Mammary epithelial cell (primary cell): ENCODE measurements at regions of chr3 and their contacts with region 1.

Region 1: GRCh38 chr3:50600841-50601591 is 10.6 kb downstream of the CISH start:
- DNase-seq: peak; percentile 91
- H3K4me3 ChIP-seq: peak overlapping the region in 1 of 3 experiments; percentile 9
- H3K27ac ChIP-seq: peak overlapping the region; percentile 42
- H3K4me1 ChIP-seq: peaks cover 31% of the 10 kb centered on the region
- H3K27me3 ChIP-seq: no peaks in the 10 kb centered on the region
- CTCF ChIP-seq: no peak

Region 2: GRCh38 chr3:49955636-49956035 is 645.4 kb before region 1 on chr3:
- CTCF ChIA-PET with region 1: no interaction called
- dilution Hi-C with region 1: no loop called
- in situ Hi-C with region 1: no loop called
- intact Hi-C with region 1: no loop called
- DNase-seq: no peak
- H3K4me3 ChIP-seq: no peak overlapping the region
- H3K27ac ChIP-seq: no peak overlapping the region
- H3K4me1 ChIP-seq: peaks cover 2% of the 10 kb centered on the region
- H3K27me3 ChIP-seq: no peaks in the 10 kb centered on the region
- CTCF ChIP-seq: no peak

Region 3: DNA sequence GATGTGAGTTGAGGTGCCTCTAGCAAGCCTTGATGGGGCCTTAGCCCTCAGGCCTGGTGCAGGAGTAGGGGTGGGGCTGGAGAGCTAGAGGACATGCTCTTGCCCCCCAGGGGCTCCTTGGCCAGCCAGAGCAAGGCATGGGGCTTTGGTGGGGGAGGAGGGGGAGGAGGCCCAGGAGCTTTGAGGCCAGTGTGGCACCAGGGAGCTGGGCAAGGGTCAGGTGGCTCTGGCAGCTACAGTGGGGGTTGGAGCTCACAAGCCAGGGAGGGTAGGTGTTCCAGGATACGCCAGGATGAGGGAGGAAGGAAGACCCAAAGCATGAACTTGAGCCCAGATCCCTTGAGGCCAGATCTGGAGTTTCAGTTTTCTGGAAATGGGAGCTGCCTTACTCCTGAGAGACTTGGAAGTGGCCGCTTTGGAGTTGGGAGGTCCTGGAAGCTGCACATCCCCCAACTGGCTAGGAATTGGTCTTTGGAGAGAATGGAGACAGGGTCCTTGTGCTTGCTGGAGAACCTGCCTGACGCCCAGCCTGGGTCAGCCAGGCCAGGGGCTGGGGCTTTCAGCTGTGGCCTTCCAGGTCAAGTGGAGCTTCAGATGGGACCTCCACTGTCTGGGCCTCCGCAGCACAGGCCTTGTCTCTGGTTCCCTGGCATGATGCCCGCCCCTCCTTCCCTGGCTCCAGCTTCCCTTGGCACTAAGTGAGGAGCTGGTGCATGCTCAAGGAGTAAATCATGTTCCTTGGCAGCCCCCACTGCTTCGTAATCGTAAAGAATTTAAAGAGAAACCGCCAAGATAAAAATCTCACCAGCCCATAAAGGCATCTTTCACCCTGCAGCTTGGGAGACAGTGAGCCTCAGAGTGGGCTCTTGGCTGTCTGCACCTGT is 437.2 kb before region 1 on chr3:
- CTCF ChIA-PET with region 1: no interaction called
- dilution Hi-C with region 1: no loop called
- in situ Hi-C with region 1: no loop called
- intact Hi-C with region 1: no loop called
- DNase-seq: peak; percentile 93
- H3K4me3 ChIP-seq: no peak overlapping the region
- H3K27ac ChIP-seq: peak overlapping the region; percentile 30
- H3K4me1 ChIP-seq: peaks cover 95% of the 10 kb centered on the region
- H3K27me3 ChIP-seq: no peaks in the 10 kb centered on the region
- CTCF ChIP-seq: no peak

Region 4: DNA sequence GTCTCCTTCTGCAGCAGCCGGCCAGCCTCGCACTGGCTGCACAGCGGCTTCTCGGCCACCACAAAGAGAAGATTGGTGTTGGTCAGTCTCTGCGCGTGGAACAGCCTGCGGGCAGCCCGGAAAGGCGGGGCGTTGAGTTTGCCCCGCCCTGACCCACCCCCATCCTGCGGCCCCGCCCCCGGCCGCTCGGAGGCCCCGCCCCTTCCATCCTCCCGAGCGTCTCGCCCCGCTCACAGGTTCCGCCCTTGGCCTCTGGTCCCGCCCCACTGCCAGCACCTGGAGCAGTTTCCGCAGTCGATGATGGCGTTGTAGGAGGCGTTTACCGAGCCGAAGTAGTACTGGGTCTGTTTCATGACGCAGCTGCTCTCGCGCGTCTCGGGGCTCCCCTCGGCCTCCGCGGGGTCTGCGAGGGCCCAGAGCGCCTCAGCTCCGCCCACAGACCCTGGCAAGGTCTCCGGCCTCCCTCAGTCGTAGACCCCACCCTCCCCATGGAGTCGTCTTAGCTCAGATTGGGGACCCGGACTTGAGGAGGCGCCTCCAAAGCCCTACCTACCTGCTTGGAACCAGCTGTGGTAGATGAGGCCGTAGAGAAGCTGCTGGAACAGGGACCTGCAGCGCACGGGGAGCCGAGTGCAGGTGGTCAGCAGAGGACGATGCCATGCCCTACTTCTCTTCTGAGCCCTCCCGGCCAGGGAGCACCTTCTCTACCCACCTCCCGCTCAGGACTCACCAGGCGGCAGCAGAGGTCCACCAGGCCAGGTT is 235.8 kb before region 1 on chr3:
- CTCF ChIA-PET with region 1: no interaction called
- dilution Hi-C with region 1: loop called (anchors 5 kb)
- in situ Hi-C with region 1: no loop called
- intact Hi-C with region 1: no loop called
- DNase-seq: peak; percentile 85
- H3K4me3 ChIP-seq: peak overlapping the region; percentile 40 to 76 (median 62)
- H3K27ac ChIP-seq: no peak overlapping the region
- H3K4me1 ChIP-seq: peaks cover 14% of the 10 kb centered on the region
- H3K27me3 ChIP-seq: no peaks in the 10 kb centered on the region
- CTCF ChIP-seq: peak in 1 of 2 donors; percentile 25

Region 5: DNA sequence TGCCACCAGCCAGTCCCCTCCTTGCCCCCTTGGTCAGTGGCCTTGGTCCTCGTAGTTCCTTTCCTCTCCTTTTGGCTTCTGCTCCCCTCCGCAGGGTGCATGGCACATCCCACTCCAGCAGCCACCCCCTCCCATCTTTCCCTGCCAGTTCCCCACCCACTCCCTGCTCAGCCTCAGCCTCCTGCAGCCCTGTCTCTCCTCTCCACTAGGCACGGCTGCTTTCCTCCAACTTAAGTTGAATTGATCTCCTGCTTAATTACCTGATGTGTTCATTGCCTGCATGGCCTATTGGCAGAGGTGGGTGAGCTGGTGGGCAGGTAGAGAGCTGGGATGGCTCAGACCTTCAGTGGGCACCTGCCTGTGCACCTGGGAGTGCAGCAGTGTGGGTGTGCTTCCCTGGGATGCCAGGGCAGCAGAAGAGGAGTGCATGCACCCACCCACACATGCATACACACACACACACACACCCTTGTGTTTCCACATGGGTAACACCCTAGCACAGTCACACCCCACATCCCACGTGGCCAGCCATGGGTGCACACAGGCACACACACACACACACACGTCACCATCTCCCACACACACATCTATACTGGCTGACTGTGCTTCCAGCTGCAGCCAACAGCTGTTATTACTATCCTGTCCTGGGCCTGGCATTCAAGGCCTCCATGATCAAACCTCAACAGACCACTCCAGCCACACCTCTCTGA is 64.4 kb before region 1 on chr3:
- CTCF ChIA-PET with region 1: no interaction called
- dilution Hi-C with region 1: loop called (anchors 5 kb)
- in situ Hi-C with region 1: no loop called
- intact Hi-C with region 1: no loop called
- DNase-seq: peak; percentile 8
- H3K4me3 ChIP-seq: no peak overlapping the region
- H3K27ac ChIP-seq: no peak overlapping the region
- H3K4me1 ChIP-seq: peaks cover 9% of the 10 kb centered on the region
- H3K27me3 ChIP-seq: peaks cover 4% of the 10 kb centered on the region
- CTCF ChIP-seq: no peak

Region 6: GRCh38 chr3:50550079-50550741 is 50.8 kb before region 1 on chr3:
- CTCF ChIA-PET with region 1: no interaction called
- dilution Hi-C with region 1: no loop called
- in situ Hi-C with region 1: no loop called
- intact Hi-C with region 1: no loop called
- DNase-seq: peak; percentile 13
- H3K4me3 ChIP-seq: no peak overlapping the region
- H3K27ac ChIP-seq: no peak overlapping the region
- H3K4me1 ChIP-seq: peaks cover 19% of the 10 kb centered on the region
- H3K27me3 ChIP-seq: no peaks in the 10 kb centered on the region
- CTCF ChIP-seq: peak; percentile 75 to 81

Region 7: DNA sequence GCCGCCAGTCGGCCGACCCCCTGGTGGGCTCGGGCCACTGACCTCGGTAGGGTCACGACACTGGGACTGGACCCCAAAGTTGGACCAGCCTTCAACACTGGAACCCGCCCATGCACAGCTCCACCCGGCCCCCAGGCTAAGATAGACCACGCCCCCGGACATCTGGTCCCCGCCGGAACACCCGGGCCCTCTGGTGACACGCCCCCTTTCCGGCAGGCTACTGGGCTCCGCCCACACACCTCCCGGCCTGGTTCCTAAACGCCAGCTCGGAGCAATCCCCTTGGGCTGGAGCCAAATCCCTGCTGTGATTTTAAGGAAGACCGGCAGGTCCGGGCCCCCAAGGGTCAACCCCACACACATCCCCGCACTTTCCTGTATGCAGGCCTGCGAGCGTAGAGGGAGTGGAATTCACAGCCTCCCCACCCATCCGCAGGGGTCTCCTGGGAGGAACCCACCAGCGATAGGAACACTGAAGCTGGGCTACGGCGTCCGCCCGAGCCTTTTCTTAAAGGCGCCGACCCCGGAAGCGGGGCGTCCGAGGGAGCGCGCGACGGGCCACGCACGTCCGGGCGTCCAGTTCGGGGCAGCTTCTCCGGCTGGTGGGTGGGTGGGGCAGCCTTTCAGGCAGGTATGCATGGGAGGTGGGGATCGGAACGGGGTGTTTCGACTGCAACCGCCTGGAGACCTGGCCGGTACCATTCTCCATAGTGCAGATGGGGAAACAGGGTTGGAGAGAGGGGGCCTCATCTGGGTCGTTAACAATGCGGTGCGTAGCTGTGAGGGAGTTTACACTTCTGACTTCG is 31.9 kb before region 1 on chr3 and contains the start of gene HEMK1:
- CTCF ChIA-PET with region 1: no interaction called
- dilution Hi-C with region 1: loop called (anchors 5 kb)
- in situ Hi-C with region 1: no loop called
- intact Hi-C with region 1: loop called (anchors 1 kb)
- DNase-seq: peak; percentile 89
- H3K4me3 ChIP-seq: peak within 1 kb of the TSS; percentile 86 to 97 (median 93)
- H3K27ac ChIP-seq: peak within 1 kb of the TSS; percentile 73
- H3K4me1 ChIP-seq: peaks cover 16% of the 10 kb centered on the region
- H3K27me3 ChIP-seq: no peaks in the 10 kb centered on the region
- CTCF ChIP-seq: no peak
- total RNA-seq, gene HEMK1: 14.2 to 23.1 TPM

Region 8: DNA sequence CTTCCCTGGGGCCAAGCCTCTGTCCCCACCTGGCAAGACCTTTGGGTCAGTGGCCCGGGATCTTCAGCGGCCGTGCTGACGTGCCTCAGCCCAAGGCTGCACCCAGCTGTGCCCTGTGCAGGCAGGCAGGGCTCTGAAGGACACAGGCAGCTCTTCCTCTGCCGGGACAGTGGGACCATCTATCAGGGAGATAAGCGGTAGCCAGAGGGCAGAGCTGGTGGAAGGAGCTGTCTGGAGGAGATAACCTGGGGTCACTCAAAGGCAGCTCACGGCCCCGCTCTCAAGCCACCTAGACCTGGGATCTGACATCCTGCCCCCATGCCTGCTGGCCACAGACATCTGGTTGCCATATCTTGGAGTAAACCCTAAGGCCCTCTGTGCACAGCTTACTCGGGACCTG is 1428.0 kb after region 1 on chr3:
- CTCF ChIA-PET with region 1: interaction called, 15 read pairs
- dilution Hi-C with region 1: no loop called
- in situ Hi-C with region 1: no loop called
- intact Hi-C with region 1: no loop called
- DNase-seq: no peak
- H3K4me3 ChIP-seq: no peak overlapping the region
- H3K27ac ChIP-seq: no peak overlapping the region
- H3K4me1 ChIP-seq: peaks cover 23% of the 10 kb centered on the region
- H3K27me3 ChIP-seq: no peaks in the 10 kb centered on the region
- CTCF ChIP-seq: no peak